HepG2 (cell line): ENCODE measurements at regions of chr19 and their contacts with region 1.

Region 1: DNA sequence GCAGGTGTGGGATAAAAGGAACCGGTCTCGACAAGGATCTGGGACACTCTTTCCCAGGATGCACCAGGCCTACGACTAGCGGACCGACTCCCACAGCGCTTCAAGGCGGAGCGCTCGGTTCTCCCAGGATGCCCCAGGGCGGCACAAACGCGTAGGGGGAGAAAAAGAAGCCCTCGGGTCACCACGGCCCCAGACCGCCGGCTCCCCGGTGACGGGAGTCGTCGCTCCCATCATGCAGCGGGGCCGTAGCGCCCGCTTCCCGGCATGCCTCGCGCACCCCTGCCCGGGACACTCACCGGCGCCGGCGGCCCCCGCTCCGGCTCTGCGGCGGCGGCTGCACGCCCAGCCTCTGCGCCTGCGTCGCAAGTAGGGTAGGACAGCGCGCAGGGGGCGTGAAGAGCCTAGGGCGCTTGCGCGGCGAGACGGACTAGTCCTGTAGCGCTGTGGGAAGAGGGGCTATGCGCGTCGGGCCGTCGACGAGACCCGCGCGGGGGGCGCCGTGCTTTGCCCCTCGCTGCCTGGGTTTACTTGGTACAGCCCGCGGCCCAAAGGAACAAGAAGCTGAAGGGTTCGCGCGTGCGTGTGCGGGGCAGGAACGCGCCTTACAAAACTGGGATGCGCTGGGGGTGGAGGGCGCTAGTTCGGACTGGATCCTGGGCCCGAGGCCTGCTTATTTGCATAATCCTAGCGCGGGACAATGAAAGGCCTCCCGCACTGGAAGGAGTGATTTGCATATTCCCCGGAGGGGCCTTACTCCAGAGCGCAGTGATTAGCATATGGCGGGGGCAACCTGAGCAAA is at the start of gene ZNF428:
- DNase-seq: peak; percentile 87
- ATAC-seq: peak; percentile 92
- H3K4me3 ChIP-seq: peak within 1 kb of the TSS; percentile 60 to 81 (median 61)
- H3K27ac ChIP-seq: peak within 1 kb of the TSS; percentile 96
- H3K4me1 ChIP-seq: peaks cover 24% of the 10 kb centered on the region
- H3K27me3 ChIP-seq: no peaks in the 10 kb centered on the region
- CTCF ChIP-seq: peak; percentile 35; the same call in 1 of the 2 replicates
- EP300 ChIP-seq: no peak
- POLR2A ChIP-seq: peak; percentile 78 to 80
- RAD21 ChIP-seq: peak; percentile 37; the same call in 1 of the 2 replicates
- total RNA-seq, gene ZNF428: 24.0 and 26.9 TPM in 2 replicates

Region 2: GRCh38 chr19:43575156-43575950 is 44.1 kb before region 1 on chr19 and contains the starts of genes PINLYP and XRCC1:
- CTCF ChIA-PET with region 1: no interaction called
- POLR2A ChIA-PET with region 1: no interaction called
- in situ Hi-C with region 1: no loop called
- intact Hi-C with region 1: no loop called
- DNase-seq: peak; percentile 96
- ATAC-seq: peak; percentile 97
- H3K4me3 ChIP-seq: peak within 1 kb of the TSS; percentile 87 to 92 (median 89)
- H3K27ac ChIP-seq: peak within 1 kb of the TSS; percentile 72
- H3K4me1 ChIP-seq: peaks cover 19% of the 10 kb centered on the region; the same call in 1 of the 2 replicates
- H3K27me3 ChIP-seq: no peaks in the 10 kb centered on the region; a peak in 1 of 5 replicates
- CTCF ChIP-seq: no peak
- EP300 ChIP-seq: 0 out of 4 replicates have a peak, but pooled peaks of 1 of the 2 experiments have one; percentile 17
- POLR2A ChIP-seq: peak; percentile 60 to 67
- RAD21 ChIP-seq: no peak
- total RNA-seq, gene PINLYP: 0.24 TPM in 1 of 2 replicates, not detected in the other
- total RNA-seq, gene XRCC1: 21.8 and 26.3 TPM in 2 replicates

Region 3: DNA sequence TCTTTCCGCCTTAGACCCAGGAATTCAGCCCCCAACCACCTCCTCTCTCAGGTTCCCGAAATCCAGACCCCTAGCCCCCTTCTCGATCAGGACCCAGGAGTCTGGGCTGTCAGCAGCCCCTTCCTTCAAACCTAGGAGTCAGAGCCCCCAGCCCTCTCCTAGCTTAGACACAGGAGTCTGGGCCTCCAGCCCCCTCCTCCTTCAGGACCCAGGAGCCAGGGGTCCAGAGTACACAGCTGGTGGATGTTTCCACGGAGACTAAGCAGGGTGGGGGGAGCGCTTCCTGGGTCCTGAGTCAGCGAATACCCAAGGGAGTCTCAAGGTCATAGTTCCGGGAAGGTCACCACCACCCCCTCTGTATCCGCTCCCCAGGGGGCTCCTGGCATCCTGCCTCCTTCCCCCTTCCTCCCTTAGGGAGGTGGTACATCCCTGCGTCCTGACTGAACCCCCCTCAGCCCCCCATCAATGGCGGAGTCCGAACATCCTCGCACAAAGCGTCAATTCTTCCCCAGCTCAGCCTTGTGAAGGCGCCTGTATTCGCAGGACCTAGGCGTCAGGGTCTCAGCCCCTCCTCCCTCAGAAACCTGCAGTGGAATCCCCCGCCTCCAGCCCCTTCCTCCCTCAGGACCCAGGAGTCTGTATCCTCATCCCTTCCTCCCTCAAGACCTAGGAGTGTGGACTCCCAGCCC is 15.6 kb after region 1 on chr19:
- CTCF ChIA-PET with region 1: no interaction called
- POLR2A ChIA-PET with region 1: interaction called, 5 read pairs
- in situ Hi-C with region 1: no loop called
- intact Hi-C with region 1: loop called (anchors 2 kb)
- DNase-seq: peak; percentile 69
- ATAC-seq: peak; percentile 74
- H3K4me3 ChIP-seq: peak overlapping the region; percentile 61 to 76 (median 67)
- H3K27ac ChIP-seq: peak overlapping the region; percentile 90
- H3K4me1 ChIP-seq: peaks cover 59% of the 10 kb centered on the region
- H3K27me3 ChIP-seq: no peaks in the 10 kb centered on the region
- CTCF ChIP-seq: no peak
- EP300 ChIP-seq: peak in 1 of 2 experiments; percentile 42; a peak in 1 of 4 replicates
- POLR2A ChIP-seq: peak; percentile 74 to 75
- RAD21 ChIP-seq: 0 out of 2 replicates have a peak, but pooled peaks have one; percentile 15

Region 4: GRCh38 chr19:44042147-44042546 is 422.7 kb after region 1 on chr19:
- CTCF ChIA-PET with region 1: no interaction called
- POLR2A ChIA-PET with region 1: no interaction called
- in situ Hi-C with region 1: no loop called
- intact Hi-C with region 1: no loop called
- DNase-seq: no peak
- ATAC-seq: no peak
- H3K4me3 ChIP-seq: no peak overlapping the region
- H3K27ac ChIP-seq: no peak overlapping the region
- H3K4me1 ChIP-seq: no peaks in the 10 kb centered on the region
- H3K27me3 ChIP-seq: no peaks in the 10 kb centered on the region
- CTCF ChIP-seq: no peak
- EP300 ChIP-seq: no peak
- POLR2A ChIP-seq: no peak
- RAD21 ChIP-seq: no peak